Tibial artery (tissue), 4 donors: ENCODE measurements at regions of chr9 and their contacts with region 1.

Region 1: DNA sequence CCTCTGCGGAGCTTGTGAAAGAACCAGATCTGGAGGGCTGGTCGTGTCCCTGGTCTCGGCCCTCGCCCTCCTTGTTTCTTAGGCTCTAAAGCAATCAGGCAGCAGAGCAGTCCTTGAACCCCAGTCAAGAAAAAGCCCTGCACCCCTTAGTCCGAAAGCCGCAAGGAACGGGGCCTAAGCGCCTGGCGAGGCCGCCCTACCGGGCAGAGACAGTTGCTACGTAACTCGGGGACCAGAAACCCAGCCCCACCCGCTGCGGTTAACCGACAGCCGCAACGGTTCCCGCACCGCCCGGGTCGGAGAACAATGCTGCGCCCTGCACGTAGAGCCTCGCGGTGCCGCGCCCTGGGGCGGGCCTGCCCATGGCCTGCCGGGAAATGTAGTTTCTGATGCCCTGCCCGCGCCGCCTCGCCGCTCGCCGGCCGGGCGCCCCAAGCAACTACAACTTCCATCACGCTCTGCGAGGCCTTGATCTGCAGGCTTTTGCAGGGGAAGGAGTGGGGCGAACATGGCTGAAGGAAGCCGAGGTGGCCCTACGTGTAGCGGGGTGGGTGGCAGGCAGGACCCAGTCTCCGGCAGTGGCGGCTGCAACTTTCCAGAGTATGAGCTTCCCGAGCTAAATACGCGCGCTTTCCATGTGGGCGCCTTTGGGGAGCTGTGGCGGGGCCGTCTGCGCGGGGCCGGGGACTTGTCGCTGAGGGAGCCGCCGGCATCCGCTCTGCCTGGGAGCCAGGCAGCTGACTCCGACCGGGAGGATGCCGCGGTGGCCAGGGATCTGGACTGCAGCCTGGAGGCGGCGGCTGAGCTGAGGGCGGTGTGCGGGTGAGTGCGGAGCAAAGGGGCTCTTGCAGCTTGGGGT is at the start of gene SNAPC3:
- DNase-seq: peak; percentile 91 to 95
- H3K4me3 ChIP-seq: peak within 1 kb of the TSS; percentile 90 to 91
- H3K27ac ChIP-seq: peak within 1 kb of the TSS; percentile 95 to 96
- H3K4me1 ChIP-seq: peaks cover 0 to 38% (median 16%) of the 10 kb centered on the region in 4 donors
- H3K27me3 ChIP-seq: no peaks in the 10 kb centered on the region
- CTCF ChIP-seq: no peak

Region 2: GRCh38 chr9:15306757-15307534 is 115.7 kb before region 1 on chr9 and contains the start of gene TTC39B:
- intact Hi-C with region 1: loop called (anchors 10 kb)
- DNase-seq: peak; percentile 94 to 97
- H3K4me3 ChIP-seq: peak within 1 kb of the TSS; percentile 90 to 92
- H3K27ac ChIP-seq: peak within 1 kb of the TSS; percentile 94 to 95
- H3K4me1 ChIP-seq: peaks cover 0 to 24% (median 6%) of the 10 kb centered on the region in 4 donors
- H3K27me3 ChIP-seq: no peaks in the 10 kb centered on the region
- CTCF ChIP-seq: no peak